Aorta (tissue), 5 donors: ENCODE measurements at regions of chr12 and their contacts with region 1.

Region 1: DNA sequence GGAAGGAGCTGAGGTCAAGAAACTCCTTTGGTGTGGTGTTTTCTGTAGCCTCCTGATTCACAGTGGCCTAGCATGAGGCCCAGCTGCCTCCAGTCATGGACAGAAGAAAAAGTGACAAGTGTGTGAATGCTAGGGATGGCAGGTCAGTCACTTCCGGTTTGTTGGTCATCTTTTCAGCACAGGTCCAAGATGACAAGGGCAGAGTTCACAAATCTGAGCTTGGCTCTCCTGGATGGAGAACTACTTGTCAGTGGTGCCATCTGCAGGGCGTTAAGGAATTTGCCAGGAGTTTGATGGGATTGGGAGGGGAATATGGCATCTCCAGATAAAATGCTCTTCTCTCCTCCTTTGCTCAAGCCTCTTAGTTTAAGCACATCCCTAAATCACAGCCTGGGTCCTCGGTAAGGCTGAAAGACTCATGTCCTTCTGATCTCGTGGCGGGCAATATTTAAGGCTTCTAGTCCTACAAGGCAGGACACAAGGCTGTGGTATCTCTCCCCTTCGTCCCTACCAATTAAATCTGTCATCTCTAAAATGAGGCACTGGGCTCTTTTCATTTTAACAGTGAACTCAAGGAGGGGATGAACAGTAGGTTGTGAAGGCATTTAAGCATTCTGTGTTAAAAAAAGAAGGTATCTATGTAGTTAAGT is 10.0 kb downstream of the TUBA1B start:
- DNase-seq: no peak
- ATAC-seq: no peak
- H3K4me3 ChIP-seq: no peak overlapping the region
- H3K27ac ChIP-seq: no peak overlapping the region
- H3K4me1 ChIP-seq: no peaks in the 10 kb centered on the region
- H3K27me3 ChIP-seq: no peaks in the 10 kb centered on the region

Region 2: DNA sequence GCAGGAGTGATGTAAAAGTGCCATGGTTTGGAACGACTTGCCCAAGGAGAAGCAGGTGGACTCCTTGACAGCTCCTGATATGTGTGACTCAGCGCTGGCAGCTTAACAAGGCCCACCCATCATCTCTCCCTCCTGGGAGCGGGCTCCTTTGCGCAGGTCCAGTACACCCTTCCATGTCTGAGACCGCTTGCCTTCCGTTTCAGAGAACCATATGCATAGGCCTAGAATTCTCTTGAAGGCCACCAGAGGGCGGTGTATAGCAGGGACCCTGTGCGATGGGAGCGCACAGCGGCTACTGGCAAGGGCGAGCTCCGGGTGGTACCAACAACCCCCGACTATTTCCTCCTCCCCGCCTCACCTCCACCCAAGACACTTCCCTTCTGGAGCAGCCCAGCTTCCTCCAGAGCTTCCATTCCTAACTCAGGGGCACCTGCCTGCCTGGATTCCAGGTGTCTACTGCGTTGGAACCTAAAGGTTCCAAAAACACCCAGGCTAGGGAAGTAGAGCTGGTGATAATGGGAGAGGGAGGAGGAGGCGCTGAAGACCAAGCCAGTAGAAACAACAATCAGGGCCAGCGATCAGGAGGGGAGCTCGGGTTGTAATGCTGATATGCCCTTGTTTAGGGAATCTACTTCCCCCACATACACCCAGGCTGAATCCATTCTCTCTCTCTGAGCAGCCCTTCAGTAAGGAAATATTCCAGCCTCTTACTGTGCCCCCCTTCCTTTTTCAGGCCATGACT is 32.8 kb before region 1 on chr12:
- intact Hi-C with region 1: loop called (anchors 2 to 5 kb)
- DNase-seq: peak; percentile 82 to 89
- ATAC-seq: peak; percentile 91
- H3K4me3 ChIP-seq: no peak overlapping the region
- H3K27ac ChIP-seq: no peak overlapping the region
- H3K4me1 ChIP-seq: no peaks in the 10 kb centered on the region
- H3K27me3 ChIP-seq: no peaks in the 10 kb centered on the region

Region 3: GRCh38 chr12:49154221-49154620 is 33.0 kb after region 1 on chr12:
- intact Hi-C with region 1: no loop called
- DNase-seq: no peak
- ATAC-seq: no peak
- H3K4me3 ChIP-seq: no peak overlapping the region
- H3K27ac ChIP-seq: no peak overlapping the region
- H3K4me1 ChIP-seq: no peaks in the 10 kb centered on the region
- H3K27me3 ChIP-seq: no peaks in the 10 kb centered on the region

Region 4: DNA sequence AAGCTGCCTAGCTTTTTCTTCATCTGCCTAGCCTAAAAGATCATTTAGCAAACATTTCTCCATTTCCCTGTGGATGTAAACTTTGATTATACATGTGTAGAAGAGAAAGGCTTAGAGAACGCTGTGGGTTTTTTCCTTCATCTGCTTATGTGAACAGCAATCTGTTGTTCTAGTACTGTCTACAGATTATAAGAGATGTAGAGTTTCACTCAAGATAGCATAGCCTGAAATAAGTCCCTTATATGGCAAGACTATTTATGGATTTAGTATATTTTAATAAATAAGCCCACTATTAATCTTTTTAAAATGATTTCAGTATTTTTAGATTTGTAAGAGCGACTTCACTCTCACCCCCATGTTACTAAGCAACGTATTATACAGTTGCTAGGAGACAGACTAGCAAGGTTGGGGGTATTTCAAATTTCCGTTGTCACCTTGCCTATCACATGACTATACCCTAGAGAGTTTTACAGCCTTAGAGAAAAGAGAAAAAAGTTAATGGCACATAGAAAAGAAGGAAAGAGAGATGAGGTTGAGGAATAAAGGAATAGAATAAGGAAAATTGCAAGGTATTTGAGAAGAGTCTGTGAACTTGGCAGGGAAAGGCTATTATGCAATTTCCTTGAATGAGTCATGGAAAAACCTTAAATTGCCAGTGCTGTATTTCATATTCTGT is 79.9 kb after region 1 on chr12:
- intact Hi-C with region 1: no loop called
- DNase-seq: no peak
- ATAC-seq: peak; percentile 90
- H3K4me3 ChIP-seq: no peak overlapping the region
- H3K27ac ChIP-seq: peak overlapping the region in 1 of 2 donors; percentile 57
- H3K4me1 ChIP-seq: no peaks in the 10 kb centered on the region
- H3K27me3 ChIP-seq: no peaks in the 10 kb centered on the region